ENCODE measurements at regions of chr11 and their contacts with region 1.

Region 1: GRCh38 chr11:34585735-34586487 is 35.0 kb upstream of the EHF start:
- DNase-seq: no peak
- H3K4me3 ChIP-seq: no peak overlapping the region
- CTCF ChIP-seq: peak; percentile 19

Region 2: DNA sequence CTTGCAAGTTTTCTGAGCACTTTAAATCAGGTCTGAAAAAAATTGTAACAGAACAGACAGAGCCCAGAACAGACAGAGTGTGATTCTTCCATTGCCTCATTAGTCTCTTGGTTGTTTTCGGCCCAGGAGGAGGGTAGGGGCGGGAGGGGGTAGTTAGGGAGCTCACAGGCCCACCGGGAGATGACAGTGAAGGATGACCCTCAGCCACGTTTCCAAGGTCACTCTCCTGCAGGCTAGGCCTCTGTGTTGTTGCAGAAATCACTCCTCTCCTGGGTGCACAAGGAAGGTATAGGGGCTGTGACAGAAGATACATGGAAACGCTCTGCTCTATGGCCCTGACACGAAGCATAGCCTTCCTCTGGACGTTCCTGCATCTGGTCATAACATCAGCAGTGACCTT is 297.4 kb before region 1 on chr11:
- CTCF ChIA-PET with region 1: no interaction called
- POLR2A ChIA-PET with region 1: no interaction called
- DNase-seq: no peak
- H3K4me3 ChIP-seq: no peak overlapping the region
- CTCF ChIP-seq: no peak

Region 3: GRCh38 chr11:34417202-34417601 is 168.7 kb before region 1 on chr11:
- CTCF ChIA-PET with region 1: no interaction called
- POLR2A ChIA-PET with region 1: no interaction called
- DNase-seq: no peak
- H3K4me3 ChIP-seq: no peak overlapping the region
- CTCF ChIP-seq: no peak

Region 4: DNA sequence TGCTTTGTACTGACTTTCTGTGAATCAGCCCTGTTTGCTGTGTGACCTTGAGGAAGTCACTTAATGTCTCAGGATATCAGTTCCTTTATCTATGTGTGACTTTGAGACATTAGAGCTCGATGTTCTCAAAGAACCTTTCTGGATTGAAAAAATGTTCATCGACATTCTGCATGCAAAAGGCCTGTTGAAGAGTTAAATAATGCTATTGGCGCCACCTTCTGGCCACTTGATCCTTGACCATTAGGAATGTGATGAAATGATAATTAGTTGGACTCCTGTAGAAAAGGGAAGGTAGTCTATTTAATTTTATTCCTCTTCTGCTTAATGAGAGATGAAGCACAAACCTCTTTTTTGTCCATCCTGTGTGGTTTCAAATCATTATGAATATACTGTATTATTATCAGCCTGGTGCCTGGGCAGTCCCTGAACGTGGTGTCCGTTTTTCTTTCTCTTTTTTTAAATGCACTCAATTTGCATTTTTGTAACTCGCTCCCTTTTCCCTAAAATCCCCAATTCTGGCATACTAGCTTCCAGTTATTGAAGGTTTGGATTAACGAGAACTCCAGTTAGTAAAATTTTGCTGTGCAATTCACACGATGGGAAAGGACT is 93.0 kb before region 1 on chr11:
- CTCF ChIA-PET with region 1: no interaction called
- POLR2A ChIA-PET with region 1: no interaction called
- DNase-seq: no peak
- H3K4me3 ChIP-seq: no peak overlapping the region
- CTCF ChIP-seq: peak; percentile 55

Region 5: DNA sequence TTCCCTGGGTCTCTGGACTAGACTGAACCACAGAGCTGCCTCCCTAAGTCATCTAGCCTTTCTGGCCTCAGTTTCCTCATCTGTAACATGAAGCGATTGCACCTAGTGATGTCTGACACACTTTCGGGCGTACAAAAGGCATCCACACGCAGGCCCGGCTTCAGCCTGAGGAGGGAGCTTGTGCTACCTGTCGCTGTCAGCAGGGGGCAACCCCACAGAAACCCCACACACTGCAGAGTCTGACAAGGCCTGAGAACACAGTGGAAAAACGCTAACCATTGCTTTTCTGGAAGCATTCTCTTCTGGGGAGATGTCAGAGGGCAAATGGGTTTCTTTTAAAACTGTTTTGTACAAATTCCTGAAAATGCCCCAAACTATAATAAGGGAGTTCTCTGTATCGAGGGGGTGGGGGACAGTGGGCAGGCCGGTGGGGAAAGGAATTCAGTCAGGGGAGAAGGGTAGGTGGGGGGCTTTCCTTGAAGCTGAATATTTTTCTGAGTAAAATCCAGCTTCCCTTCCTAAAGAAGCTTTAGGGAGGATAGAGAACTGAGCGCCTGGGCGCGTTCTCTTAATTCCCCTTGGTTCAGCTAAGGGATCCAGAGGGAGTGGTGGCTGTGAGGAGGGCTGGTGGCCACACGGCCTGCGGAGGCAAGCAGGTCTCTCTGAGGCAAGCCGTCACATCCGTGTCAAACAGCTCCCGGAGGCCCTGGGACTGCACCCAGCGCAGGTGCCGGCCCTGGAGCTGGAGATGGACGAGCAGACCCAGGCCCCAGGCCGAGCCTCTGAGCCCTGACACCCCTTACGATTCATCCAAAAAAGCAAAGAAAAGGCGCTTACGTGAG is 72.8 kb before region 1 on chr11:
- CTCF ChIA-PET with region 1: interaction called, 13 read pairs
- POLR2A ChIA-PET with region 1: no interaction called
- DNase-seq: no peak
- H3K4me3 ChIP-seq: no peak overlapping the region
- CTCF ChIP-seq: peak; percentile 89

Region 6: GRCh38 chr11:34653826-34654490 is 68.0 kb after region 1 on chr11:
- CTCF ChIA-PET with region 1: interaction called, 13 read pairs
- POLR2A ChIA-PET with region 1: no interaction called
- DNase-seq: peak; percentile 77
- H3K4me3 ChIP-seq: no peak overlapping the region
- CTCF ChIP-seq: peak; percentile 4

Region 7: DNA sequence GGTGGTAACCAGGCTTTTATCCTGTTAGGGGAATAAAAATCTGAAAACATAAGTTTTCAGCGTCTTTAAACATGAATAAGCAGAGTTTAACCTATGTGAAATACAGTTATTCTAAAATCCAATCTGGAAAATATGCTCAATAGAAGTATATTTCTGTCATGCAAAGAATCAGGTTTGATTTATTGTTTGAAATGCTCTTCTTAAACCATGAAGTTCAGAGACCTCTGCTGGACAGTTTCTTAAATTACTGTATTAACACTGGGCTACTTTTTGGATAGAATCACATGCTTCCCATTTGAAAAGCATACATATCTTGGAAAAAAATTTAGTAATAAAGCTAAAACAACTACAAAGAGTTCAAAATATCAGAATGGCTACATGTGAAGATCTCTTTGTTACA is 304.9 kb after region 1 on chr11:
- CTCF ChIA-PET with region 1: interaction called, 360 read pairs
- POLR2A ChIA-PET with region 1: no interaction called
- DNase-seq: no peak
- H3K4me3 ChIP-seq: no peak overlapping the region
- CTCF ChIP-seq: peak; percentile 13

Region 8: GRCh38 chr11:34916015-34916842 is 330.3 kb after region 1 on chr11 and contains the starts of genes APIP and PDHX:
- CTCF ChIA-PET with region 1: interaction called, 20 read pairs
- POLR2A ChIA-PET with region 1: no interaction called
- DNase-seq: peak; percentile 87
- H3K4me3 ChIP-seq: peak within 1 kb of the TSS; percentile 91
- CTCF ChIP-seq: no peak